ENCODE measurements at regions of chr5 and their contacts with region 1.

Region 1: GRCh38 chr5:40834849-40835787 is at the start of gene RPL37:
- DNase-seq: peak; percentile 81 to 96 (median 90)
- ATAC-seq: peak; percentile 84
- H3K4me3 ChIP-seq: peak within 1 kb of the TSS; percentile 87 to 94
- H3K4me3 Mint-ChIP-seq: peak within 1 kb of the TSS; percentile 97
- H3K27ac ChIP-seq: peak within 1 kb of the TSS; percentile 89 to 99
- H3K27ac Mint-ChIP-seq: peak within 1 kb of the TSS; percentile 98
- H3K4me1 ChIP-seq: peaks cover 20% of the 10 kb centered on the region
- H3K4me1 Mint-ChIP-seq: peaks cover 45% of the 10 kb centered on the region
- H3K27me3 ChIP-seq: peaks cover 0 to 3% of the 10 kb centered on the region in 2 experiments
- H3K27me3 Mint-ChIP-seq: no peaks in the 10 kb centered on the region
- CTCF ChIP-seq: no peak
- total RNA-seq, gene RPL37: 2,804 to 2,873 TPM

Region 2: GRCh38 chr5:39074016-39074886 is 1760.9 kb before region 1 on chr5 and contains the start of gene RICTOR:
- CTCF ChIA-PET with region 1: no interaction called
- POLR2A ChIA-PET with region 1: no interaction called
- intact Hi-C with region 1: loop called in 1 of 2 experiments (anchors 10 kb)
- DNase-seq: peak; percentile 85 to 94 (median 91)
- ATAC-seq: peak; percentile 71
- H3K4me3 ChIP-seq: peak within 1 kb of the TSS; percentile 81 to 95
- H3K4me3 Mint-ChIP-seq: peak within 1 kb of the TSS; percentile 97
- H3K27ac ChIP-seq: peak within 1 kb of the TSS; percentile 92 to 94
- H3K27ac Mint-ChIP-seq: peak within 1 kb of the TSS; percentile 96
- H3K4me1 ChIP-seq: peaks cover 36% of the 10 kb centered on the region
- H3K4me1 Mint-ChIP-seq: peaks cover 46% of the 10 kb centered on the region
- H3K27me3 ChIP-seq: peaks cover 10 to 11% of the 10 kb centered on the region in 2 experiments
- H3K27me3 Mint-ChIP-seq: peaks cover 25% of the 10 kb centered on the region
- CTCF ChIP-seq: no peak
- total RNA-seq, gene RICTOR: 116 to 128 TPM

Region 3: DNA sequence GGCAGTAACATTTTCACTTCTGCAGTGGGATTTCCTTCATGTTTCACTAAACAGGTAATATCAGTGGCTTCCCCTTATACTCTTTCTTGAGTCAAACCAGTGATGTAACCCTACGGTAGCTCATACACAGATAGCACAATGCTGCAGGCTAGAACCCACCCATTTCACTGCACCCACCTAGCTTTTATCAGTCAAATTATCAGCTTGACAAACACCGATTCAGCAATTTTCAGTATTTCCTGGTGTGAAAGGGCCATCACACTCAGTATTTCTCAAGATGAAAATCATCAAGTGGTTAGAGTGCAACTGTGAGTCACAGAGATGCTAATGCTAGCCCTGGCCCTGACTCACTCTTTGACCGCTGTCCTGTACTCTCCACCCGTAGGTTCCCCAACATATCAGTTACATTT is 397.7 kb before region 1 on chr5:
- CTCF ChIA-PET with region 1: no interaction called
- POLR2A ChIA-PET with region 1: no interaction called
- intact Hi-C with region 1: loop called in 1 of 2 experiments (anchors 10 kb)
- DNase-seq: peak in 6 of 9 experiments; percentile 17 to 85 (median 32)
- ATAC-seq: peak; percentile 20
- H3K4me3 ChIP-seq: no peak overlapping the region
- H3K4me3 Mint-ChIP-seq: no peak overlapping the region
- H3K27ac ChIP-seq: peak overlapping the region; percentile 51 to 91
- H3K27ac Mint-ChIP-seq: peak overlapping the region; percentile 86
- H3K4me1 ChIP-seq: peaks cover 40% of the 10 kb centered on the region
- H3K4me1 Mint-ChIP-seq: peaks cover 67% of the 10 kb centered on the region
- H3K27me3 ChIP-seq: no peaks in the 10 kb centered on the region
- H3K27me3 Mint-ChIP-seq: no peaks in the 10 kb centered on the region
- CTCF ChIP-seq: no peak

Region 4: GRCh38 chr5:40755407-40756365 is 79.4 kb before region 1 on chr5 and contains the start of gene TTC33:
- CTCF ChIA-PET with region 1: interaction called, 3 read pairs
- POLR2A ChIA-PET with region 1: interaction called, 3 read pairs
- intact Hi-C with region 1: loop called (anchors 1 kb)
- DNase-seq: peak; percentile 86 to 96 (median 94)
- ATAC-seq: peak; percentile 85
- H3K4me3 ChIP-seq: peak within 1 kb of the TSS; percentile 93 to 98
- H3K4me3 Mint-ChIP-seq: no peak within 1 kb of the TSS
- H3K27ac ChIP-seq: peak within 1 kb of the TSS; percentile 79 to 89
- H3K27ac Mint-ChIP-seq: no peak within 1 kb of the TSS
- H3K4me1 ChIP-seq: peaks cover 18% of the 10 kb centered on the region
- H3K4me1 Mint-ChIP-seq: peaks cover 24% of the 10 kb centered on the region
- H3K27me3 ChIP-seq: no peaks in the 10 kb centered on the region
- H3K27me3 Mint-ChIP-seq: no peaks in the 10 kb centered on the region
- CTCF ChIP-seq: peak; percentile 62
- total RNA-seq, gene TTC33: 6.7 to 7.1 TPM

Region 5: GRCh38 chr5:40798012-40798855 is 36.9 kb before region 1 on chr5 and contains the start of gene PRKAA1:
- CTCF ChIA-PET with region 1: no interaction called
- POLR2A ChIA-PET with region 1: interaction called, 4 read pairs
- intact Hi-C with region 1: loop called (anchors 1 kb)
- DNase-seq: peak; percentile 84 to 95 (median 90)
- ATAC-seq: peak; percentile 93
- H3K4me3 ChIP-seq: peak within 1 kb of the TSS; percentile 93 to 99
- H3K4me3 Mint-ChIP-seq: peak within 1 kb of the TSS; percentile 94
- H3K27ac ChIP-seq: peak within 1 kb of the TSS; percentile 90 to 94
- H3K27ac Mint-ChIP-seq: peak within 1 kb of the TSS; percentile 94
- H3K4me1 ChIP-seq: peaks cover 22% of the 10 kb centered on the region
- H3K4me1 Mint-ChIP-seq: peaks cover 47% of the 10 kb centered on the region
- H3K27me3 ChIP-seq: no peaks in the 10 kb centered on the region
- H3K27me3 Mint-ChIP-seq: no peaks in the 10 kb centered on the region
- CTCF ChIP-seq: peak; percentile 65
- total RNA-seq, gene PRKAA1: 113 to 114 TPM

Region 6: DNA sequence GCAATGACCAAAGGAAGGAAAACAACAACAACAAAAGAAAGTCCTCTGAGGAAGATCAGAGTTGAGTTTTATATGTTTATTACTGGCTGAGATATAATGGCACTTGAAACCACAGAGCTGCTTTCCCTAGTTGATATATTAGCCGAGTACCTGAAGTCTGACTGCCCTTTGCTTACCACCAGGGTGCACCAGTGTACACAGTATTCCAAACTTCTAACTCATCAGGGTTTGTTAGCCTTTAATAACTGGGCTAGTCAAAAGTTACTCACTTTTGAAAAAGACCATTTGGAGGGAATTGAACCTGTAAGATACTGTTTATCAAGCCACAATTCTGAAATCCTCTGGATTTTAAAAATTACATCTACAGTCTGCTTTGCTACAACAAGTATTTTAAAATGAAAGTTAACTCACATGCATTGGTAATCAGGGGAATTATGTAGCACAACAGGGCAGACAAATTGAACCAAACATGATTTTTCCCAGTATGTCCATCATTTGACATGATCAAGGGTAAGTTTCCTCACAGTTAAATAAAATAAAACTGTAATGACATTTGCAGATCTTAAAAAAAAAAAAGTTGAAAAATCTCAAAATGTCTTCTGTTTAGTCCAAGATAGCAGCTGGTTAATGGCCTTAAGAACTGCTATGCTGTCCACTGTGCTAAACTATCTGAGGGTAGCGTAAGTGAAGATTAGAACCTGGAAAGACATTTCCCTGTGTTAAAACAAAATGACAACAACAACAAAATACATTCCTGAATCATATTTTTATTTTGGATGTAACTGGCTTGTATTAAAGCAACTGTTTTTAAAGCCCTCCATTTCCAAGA is 435.5 kb after region 1 on chr5:
- CTCF ChIA-PET with region 1: no interaction called
- POLR2A ChIA-PET with region 1: no interaction called
- intact Hi-C with region 1: no loop called
- DNase-seq: peak in 2 of 9 experiments; percentile 5 to 14
- ATAC-seq: no peak
- H3K4me3 ChIP-seq: no peak overlapping the region
- H3K4me3 Mint-ChIP-seq: no peak overlapping the region
- H3K27ac ChIP-seq: no peak overlapping the region
- H3K27ac Mint-ChIP-seq: no peak overlapping the region
- H3K4me1 ChIP-seq: no peaks in the 10 kb centered on the region
- H3K4me1 Mint-ChIP-seq: no peaks in the 10 kb centered on the region
- H3K27me3 ChIP-seq: no peaks in the 10 kb centered on the region
- H3K27me3 Mint-ChIP-seq: no peaks in the 10 kb centered on the region
- CTCF ChIP-seq: peak; percentile 22

Region 7: DNA sequence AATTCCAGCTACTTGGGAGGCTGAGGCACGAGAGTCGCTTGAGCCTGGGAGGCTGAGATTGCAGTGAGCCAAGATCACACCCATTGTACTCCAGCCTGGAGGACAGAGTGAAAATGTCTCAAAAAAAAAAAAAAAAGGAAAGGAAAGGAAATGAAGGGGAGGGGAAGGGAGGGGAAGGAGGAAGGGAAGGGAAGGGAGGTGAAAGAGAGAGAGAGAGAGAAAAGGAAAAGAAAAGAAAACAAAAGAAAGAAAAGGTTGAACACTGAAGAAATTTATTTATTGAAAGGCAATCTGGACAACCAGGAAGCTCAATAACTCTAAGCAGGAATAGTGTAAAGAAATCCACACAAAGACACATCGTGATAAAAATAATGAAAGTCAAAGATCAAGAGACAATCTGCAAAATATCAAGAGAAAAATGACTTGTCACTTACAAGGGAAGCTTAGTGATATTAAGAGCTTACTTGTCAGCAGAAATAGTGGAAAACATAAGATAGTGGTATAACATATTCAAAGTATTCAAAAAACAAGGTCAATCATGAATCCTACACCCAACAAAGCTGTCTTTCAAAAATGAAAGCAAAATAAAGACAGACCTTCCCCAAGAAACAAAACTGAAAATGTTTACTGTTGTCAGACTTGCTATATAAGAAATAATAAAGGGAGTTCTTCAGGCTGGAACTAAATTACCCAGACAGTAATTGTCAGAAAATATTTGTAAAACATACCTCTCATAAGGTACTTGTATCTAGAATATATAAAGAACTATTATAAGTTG is 1058.1 kb after region 1 on chr5:
- CTCF ChIA-PET with region 1: no interaction called
- POLR2A ChIA-PET with region 1: no interaction called
- intact Hi-C with region 1: loop called in 1 of 2 experiments (anchors 10 kb)
- DNase-seq: no peak
- ATAC-seq: no peak
- H3K4me3 ChIP-seq: no peak overlapping the region
- H3K4me3 Mint-ChIP-seq: no peak overlapping the region
- H3K27ac ChIP-seq: no peak overlapping the region
- H3K27ac Mint-ChIP-seq: no peak overlapping the region
- H3K4me1 ChIP-seq: no peaks in the 10 kb centered on the region
- H3K4me1 Mint-ChIP-seq: peaks cover 2% of the 10 kb centered on the region
- H3K27me3 ChIP-seq: no peaks in the 10 kb centered on the region
- H3K27me3 Mint-ChIP-seq: peaks cover 20% of the 10 kb centered on the region
- CTCF ChIP-seq: no peak

Region 8: DNA sequence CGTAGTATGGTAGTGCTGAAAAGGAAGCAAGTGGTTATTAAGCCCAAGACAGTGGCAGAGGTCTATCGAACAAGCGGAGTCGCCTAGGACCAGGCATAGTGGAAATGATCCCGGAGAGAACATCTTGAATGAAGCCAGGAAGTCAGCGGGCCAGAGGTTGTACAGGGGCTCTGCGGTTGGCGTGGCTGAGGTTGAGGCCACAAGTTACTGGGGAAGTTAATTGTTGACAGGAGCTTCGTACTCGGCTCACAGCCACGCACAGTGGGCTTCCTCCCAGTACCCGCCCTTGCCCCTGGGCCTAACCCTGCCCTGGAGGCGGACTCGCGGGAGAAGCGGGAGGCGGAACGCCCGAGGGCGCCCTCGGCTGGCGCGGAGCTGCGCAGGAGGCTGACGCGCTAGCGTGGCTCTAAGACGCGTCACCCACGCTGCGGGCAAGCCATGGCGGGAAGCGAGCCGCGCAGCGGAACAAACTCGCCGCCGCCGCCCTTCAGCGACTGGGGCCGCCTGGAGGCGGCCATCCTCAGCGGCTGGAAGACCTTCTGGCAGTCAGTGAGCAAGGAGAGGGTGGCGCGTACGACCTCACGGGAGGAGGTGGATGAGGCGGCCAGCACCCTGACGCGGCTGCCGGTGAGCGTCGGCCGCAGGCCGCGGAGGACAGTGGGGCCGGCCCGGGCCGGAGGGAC is 1089.9 kb after region 1 on chr5 and contains the start of gene FBXO4:
- CTCF ChIA-PET with region 1: no interaction called
- POLR2A ChIA-PET with region 1: no interaction called
- intact Hi-C with region 1: loop called in 1 of 2 experiments (anchors 10 kb)
- DNase-seq: peak; percentile 79 to 96 (median 88)
- ATAC-seq: peak; percentile 96
- H3K4me3 ChIP-seq: peak within 1 kb of the TSS; percentile 79 to 87
- H3K4me3 Mint-ChIP-seq: peak within 1 kb of the TSS; percentile 87
- H3K27ac ChIP-seq: peak within 1 kb of the TSS; percentile 91 to 98
- H3K27ac Mint-ChIP-seq: peak within 1 kb of the TSS; percentile 99
- H3K4me1 ChIP-seq: peaks cover 16% of the 10 kb centered on the region
- H3K4me1 Mint-ChIP-seq: peaks cover 28% of the 10 kb centered on the region
- H3K27me3 ChIP-seq: no peaks in the 10 kb centered on the region
- H3K27me3 Mint-ChIP-seq: no peaks in the 10 kb centered on the region
- CTCF ChIP-seq: peak; percentile 57
- total RNA-seq, gene FBXO4: 4.4 to 4.7 TPM